ENCODE measurements at regions of chr18 and their contacts with region 1.

Region 1: GRCh38 chr18:63025251-63026090 is 294.1 kb downstream of the BCL2 start:
- DNase-seq: peak in 1 of 2 experiments; percentile 25
- H3K4me3 ChIP-seq: no peak overlapping the region
- H3K4me3 Mint-ChIP-seq: no peak overlapping the region
- H3K27ac Mint-ChIP-seq: no peak overlapping the region
- H3K4me1 ChIP-seq: no peaks in the 10 kb centered on the region
- H3K4me1 Mint-ChIP-seq: peaks cover 6% of the 10 kb centered on the region
- H3K27me3 ChIP-seq: no peaks in the 10 kb centered on the region
- H3K27me3 Mint-ChIP-seq: no peaks in the 10 kb centered on the region
- CTCF ChIP-seq: peak in 1 of 2 experiments; percentile 17

Region 2: DNA sequence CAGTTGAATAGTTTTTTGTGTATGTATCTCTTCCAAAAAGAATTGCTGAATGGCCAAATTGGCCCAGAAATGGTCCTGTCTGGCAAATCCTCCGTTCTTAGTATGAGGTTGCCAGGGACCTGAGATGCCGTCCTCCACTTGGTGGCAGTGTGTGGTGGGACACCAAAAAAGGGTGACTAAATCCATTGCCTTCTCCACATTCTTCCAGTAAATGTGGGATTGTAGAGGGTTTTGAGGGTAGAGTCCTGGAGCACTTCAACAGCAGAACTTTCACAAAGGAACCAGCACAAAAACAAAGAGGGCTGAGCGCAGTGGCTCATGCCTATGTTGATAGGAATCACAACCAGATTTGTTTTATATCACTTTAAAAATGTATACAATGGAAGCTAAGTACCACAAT is 94.2 kb after region 1 on chr18:
- CTCF ChIA-PET with region 1: interaction called, 4 read pairs
- POLR2A ChIA-PET with region 1: no interaction called
- intact Hi-C with region 1: loop called (anchors 5 kb)
- DNase-seq: peak in 1 of 2 experiments; percentile 40
- H3K4me3 ChIP-seq: no peak overlapping the region
- H3K4me3 Mint-ChIP-seq: no peak overlapping the region
- H3K27ac Mint-ChIP-seq: no peak overlapping the region
- H3K4me1 ChIP-seq: no peaks in the 10 kb centered on the region
- H3K4me1 Mint-ChIP-seq: no peaks in the 10 kb centered on the region
- H3K27me3 ChIP-seq: no peaks in the 10 kb centered on the region
- H3K27me3 Mint-ChIP-seq: no peaks in the 10 kb centered on the region
- CTCF ChIP-seq: peak; percentile 20 to 52

Measured in Caco-2 (cell line).